ENCODE measurements at regions of chr17 and their contacts with region 1.

Region 1: DNA sequence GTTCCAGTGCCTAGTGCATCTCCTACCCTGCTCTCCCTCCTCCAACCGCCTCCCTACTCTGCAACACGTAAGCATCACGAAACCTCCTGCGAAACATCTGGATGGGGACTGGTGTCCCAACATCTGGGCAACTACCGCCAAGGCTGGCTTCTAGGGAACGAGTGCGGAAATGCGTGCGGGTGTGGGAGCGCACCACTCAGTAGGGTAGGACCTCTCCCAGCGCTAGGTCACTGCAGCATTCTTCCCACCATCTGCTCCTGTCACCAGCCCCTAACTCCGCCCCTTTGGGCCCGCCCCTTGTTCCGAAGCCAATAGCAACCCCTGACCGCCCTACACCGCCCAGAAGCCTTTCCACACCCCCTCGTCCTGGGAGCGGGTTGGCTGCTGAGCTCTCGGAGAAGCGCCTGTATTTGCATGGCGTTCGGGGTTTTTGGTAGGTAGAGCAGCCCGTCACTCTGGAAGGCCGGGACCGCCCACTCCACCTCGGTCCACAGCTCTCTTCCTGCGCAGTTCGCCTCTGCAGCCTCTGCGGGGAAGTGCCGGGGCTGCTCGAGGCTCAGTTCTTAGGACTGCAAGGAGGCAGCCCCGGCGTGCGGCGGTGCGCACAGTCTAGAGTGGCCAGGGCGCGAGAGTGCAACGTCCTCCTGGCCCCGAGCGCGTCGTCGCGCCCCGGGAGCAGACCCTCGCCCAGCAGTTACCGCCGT is at the start of gene HS3ST3B1:
- DNase-seq: peak; percentile 98 to 99
- ATAC-seq: peak; percentile 80 to 92
- H3K4me3 ChIP-seq: peak within 1 kb of the TSS; percentile 53
- H3K27ac ChIP-seq: peak within 1 kb of the TSS; percentile 36 to 67; a peak in 5 of 6 replicates
- H3K4me1 ChIP-seq: peaks cover 29% of the 10 kb centered on the region
- CTCF ChIP-seq: no peak
- EP300 ChIP-seq: no peak
- POLR2A ChIP-seq: peak; percentile 68
- RAD21 ChIP-seq: peak in 1 of 2 experiments; percentile 26; a peak in 2 of 5 replicates
- polyA plus RNA-seq, gene HS3ST3B1: 0.44 and 0.67 TPM in 2 replicates

Region 2: DNA sequence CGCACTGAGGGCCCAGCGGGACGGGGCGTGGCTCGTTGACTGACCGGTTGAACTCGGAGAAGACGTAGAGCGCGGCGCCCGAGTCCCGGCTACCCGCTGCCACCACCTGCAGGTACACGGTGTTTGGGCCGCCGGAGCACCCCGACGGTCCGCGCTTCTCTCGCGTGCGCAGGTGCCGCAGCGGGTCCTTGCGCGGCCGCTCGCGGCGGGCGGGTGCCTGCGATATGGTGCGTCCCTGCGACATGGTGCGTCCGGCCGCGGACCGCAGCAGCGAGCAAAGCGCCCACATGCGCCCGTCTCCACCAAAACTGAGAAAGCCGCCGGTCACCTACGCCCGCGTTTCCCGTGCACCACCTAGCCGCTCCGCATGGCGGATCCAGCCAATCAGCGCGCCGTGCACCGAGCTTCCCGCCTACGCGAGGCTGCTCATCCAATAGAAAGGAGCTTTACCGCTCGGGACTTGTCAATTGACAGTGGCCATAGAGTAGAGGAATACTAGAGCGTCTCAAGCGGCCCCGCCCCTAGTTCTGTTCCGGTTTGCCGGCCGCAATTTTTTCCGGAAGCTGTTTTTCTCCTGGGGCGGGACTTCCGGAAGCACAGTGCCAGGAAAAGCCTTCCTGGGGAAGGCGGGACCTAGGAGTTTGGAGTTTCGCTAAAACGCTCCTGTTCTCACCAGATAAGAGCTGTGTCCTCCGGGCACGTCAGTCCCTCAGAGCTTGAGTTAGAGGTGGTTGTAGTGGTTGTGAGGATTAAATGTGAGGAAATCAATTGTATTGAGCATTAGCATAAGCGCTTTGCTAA is 1282.9 kb before region 1 on chr17 and contains the start of gene ELAC2:
- CTCF ChIA-PET with region 1: no interaction called
- POLR2A ChIA-PET with region 1: interaction called, 10 read pairs
- DNase-seq: peak; percentile 98 to 99
- ATAC-seq: peak; percentile 96 to 99
- H3K4me3 ChIP-seq: peak within 1 kb of the TSS; percentile 80
- H3K27ac ChIP-seq: peak within 1 kb of the TSS; percentile 85 to 91
- H3K4me1 ChIP-seq: peaks cover 13% of the 10 kb centered on the region
- CTCF ChIP-seq: no peak
- EP300 ChIP-seq: no peak
- POLR2A ChIP-seq: peak; percentile 90
- RAD21 ChIP-seq: no peak
- polyA plus RNA-seq, gene ELAC2: 97.9 and 103 TPM in 2 replicates

Region 3: DNA sequence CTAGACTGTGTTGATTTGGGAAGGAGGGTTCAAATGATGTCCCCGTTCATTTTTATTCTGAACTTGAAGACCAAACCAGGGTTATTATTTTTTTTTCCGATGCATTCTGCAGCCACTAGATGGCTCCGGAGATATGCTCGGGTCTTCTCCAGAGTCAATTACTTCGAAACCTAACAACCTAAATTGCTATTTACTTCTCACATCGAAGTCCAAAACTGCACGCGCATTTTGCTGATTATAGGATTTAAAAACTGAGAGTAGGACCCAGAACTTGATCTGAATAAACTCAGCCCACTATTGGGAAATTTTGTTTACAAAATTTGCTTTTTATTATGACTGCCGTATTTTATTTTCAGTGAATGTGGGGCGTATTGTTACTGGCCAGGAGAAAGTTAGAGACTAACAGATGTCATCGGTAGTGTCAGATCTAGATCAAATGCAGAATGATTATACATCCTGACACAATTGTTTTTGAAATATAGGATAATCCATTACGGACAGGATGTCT is 962.8 kb before region 1 on chr17:
- CTCF ChIA-PET with region 1: interaction called, 30 read pairs
- POLR2A ChIA-PET with region 1: no interaction called
- DNase-seq: peak; percentile 36 to 62
- ATAC-seq: peak; percentile 68 to 74; a peak in 3 of 6 replicates
- H3K4me3 ChIP-seq: peak overlapping the region; percentile 27
- H3K27ac ChIP-seq: no peak overlapping the region
- H3K4me1 ChIP-seq: no peaks in the 10 kb centered on the region
- CTCF ChIP-seq: peak; percentile 90
- EP300 ChIP-seq: no peak
- POLR2A ChIP-seq: no peak
- RAD21 ChIP-seq: peak; percentile 79 to 84

Region 4: GRCh38 chr17:13594762-13595598 is 705.7 kb before region 1 on chr17:
- CTCF ChIA-PET with region 1: interaction called, 48 read pairs
- POLR2A ChIA-PET with region 1: no interaction called
- DNase-seq: peak; percentile 67 to 86
- ATAC-seq: peak; percentile 67 to 93; a peak in 4 of 6 replicates
- H3K4me3 ChIP-seq: no peak overlapping the region
- H3K27ac ChIP-seq: peak overlapping the region; percentile 9 to 56; a peak in 3 of 6 replicates
- H3K4me1 ChIP-seq: no peaks in the 10 kb centered on the region
- CTCF ChIP-seq: peak; percentile 85
- EP300 ChIP-seq: no peak
- POLR2A ChIP-seq: no peak
- RAD21 ChIP-seq: peak; percentile 71 to 77

Region 5: DNA sequence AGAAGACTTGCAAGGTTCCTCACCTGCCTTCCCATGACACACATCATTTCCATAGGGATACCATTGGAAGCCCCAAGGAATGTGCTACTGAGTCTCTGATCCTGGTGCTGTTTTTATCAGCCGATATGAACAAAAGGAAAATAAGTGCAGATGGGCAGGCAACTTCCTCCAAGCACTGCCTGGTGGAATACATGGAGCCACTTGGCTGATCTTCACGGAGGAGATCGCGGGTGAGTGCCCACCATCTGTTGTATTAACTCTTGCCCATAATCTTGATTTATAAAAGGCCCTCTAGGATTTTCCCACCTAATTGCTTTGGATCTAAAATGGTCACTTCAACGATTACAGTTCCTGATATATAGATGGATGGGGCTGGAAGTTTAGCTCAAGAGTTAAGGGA is 39.3 kb before region 1 on chr17:
- CTCF ChIA-PET with region 1: no interaction called
- POLR2A ChIA-PET with region 1: no interaction called
- DNase-seq: no peak
- ATAC-seq: no peak
- H3K4me3 ChIP-seq: no peak overlapping the region
- H3K27ac ChIP-seq: no peak overlapping the region
- H3K4me1 ChIP-seq: no peaks in the 10 kb centered on the region
- CTCF ChIP-seq: no peak
- EP300 ChIP-seq: no peak
- POLR2A ChIP-seq: no peak
- RAD21 ChIP-seq: no peak

Region 6: GRCh38 chr17:14282726-14283125 is 18.0 kb before region 1 on chr17:
- CTCF ChIA-PET with region 1: interaction called, 16 read pairs
- POLR2A ChIA-PET with region 1: no interaction called
- DNase-seq: no peak
- ATAC-seq: no peak
- H3K4me3 ChIP-seq: no peak overlapping the region
- H3K27ac ChIP-seq: no peak overlapping the region
- H3K4me1 ChIP-seq: no peaks in the 10 kb centered on the region
- CTCF ChIP-seq: no peak
- EP300 ChIP-seq: no peak
- POLR2A ChIP-seq: no peak
- RAD21 ChIP-seq: no peak

Region 7: DNA sequence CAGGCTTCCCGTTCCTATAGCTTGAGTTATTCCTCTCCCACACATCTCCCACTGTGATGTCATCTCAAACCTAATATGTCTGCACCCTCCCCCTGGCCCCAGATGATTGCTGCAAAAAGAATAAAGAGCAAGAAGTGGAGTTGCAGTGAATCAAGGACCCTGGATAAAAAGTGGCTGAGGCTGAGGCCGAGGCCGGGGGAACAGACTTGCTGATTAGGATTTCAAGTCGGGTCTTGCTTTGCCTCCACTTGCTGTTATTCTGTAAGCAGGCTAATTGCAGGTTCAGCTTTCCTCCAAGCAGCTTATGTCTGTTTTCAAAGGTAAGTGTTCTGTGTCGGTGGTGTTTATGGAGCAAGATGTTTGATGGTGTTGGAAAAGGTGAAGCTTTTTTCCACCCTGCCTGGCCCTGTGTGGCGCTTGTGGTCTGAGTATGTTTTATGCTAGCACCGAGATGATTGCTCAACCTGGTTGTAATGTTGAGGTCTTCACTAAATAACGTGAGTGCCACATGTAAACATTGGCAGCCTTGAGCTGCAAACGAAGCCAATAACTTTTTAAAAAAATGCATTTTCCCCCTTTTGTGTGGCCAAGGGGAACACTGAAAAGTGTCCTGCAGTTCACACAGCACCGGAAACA is 15.5 kb after region 1 on chr17:
- CTCF ChIA-PET with region 1: interaction called, 29 read pairs
- POLR2A ChIA-PET with region 1: no interaction called
- DNase-seq: no peak
- ATAC-seq: no peak
- H3K4me3 ChIP-seq: no peak overlapping the region
- H3K27ac ChIP-seq: no peak overlapping the region
- H3K4me1 ChIP-seq: no peaks in the 10 kb centered on the region
- CTCF ChIP-seq: no peak
- EP300 ChIP-seq: no peak
- POLR2A ChIP-seq: no peak
- RAD21 ChIP-seq: no peak

Region 8: GRCh38 chr17:14321476-14321949 is 20.8 kb after region 1 on chr17:
- CTCF ChIA-PET with region 1: interaction called, 29 read pairs
- POLR2A ChIA-PET with region 1: no interaction called
- DNase-seq: no peak
- ATAC-seq: no peak
- H3K4me3 ChIP-seq: no peak overlapping the region
- H3K27ac ChIP-seq: no peak overlapping the region
- H3K4me1 ChIP-seq: peaks cover 8% of the 10 kb centered on the region; the same call in 2 of the 3 replicates
- CTCF ChIP-seq: no peak
- EP300 ChIP-seq: no peak
- POLR2A ChIP-seq: no peak
- RAD21 ChIP-seq: no peak

Measured in A549 (cell line).